Calu3 (cell line): ENCODE measurements at regions of chr5 and their contacts with region 1.

Region 1: DNA sequence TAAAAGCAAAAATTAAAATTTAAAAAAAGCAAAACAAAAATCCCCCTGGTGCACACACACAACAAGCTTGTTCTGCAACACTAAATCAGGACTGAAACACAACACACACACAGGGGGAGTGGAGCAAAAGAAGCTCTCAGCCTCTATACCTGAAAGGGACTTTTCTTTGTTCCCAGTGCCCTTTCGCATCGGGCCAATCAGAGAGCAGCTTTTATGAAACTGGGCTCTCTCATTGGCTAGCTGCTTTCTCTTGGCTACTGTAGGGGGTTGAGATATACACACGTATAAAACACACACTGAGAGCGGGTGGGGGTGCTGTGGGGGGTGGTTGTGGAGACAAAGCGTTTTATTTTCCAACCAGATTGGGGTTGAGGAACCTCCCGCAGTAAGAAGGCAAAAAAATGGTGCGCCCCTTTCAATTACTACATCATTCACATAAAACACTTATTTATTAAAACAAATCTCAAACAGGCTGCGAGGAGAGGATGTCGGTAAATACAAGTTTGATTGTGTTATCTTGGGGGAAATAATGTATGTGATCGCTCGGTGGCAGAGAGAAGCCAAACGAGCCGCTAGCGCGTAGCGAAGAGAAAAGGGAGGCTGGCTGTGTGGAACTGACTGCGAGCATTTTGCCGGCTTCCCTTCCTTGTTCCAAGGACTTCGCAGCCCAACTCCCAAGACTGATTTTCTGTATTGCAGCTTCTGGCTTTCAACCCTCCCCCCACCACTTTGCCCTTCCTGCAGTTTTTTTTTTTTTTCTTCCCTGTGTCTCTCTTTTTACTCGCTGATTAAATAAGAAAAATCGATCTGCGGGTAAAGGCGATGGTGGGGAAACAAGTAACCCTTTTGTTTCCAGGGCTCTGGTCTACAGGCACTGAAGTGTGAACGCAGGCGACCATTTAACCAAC is 2.5 kb upstream of the ZNF608 start:
- DNase-seq: peak; percentile 83
- H3K4me3 Mint-ChIP-seq: peak overlapping the region; percentile 80
- H3K27ac Mint-ChIP-seq: peak overlapping the region; percentile 96
- H3K4me1 Mint-ChIP-seq: peaks cover 26% of the 10 kb centered on the region
- H3K27me3 Mint-ChIP-seq: no peaks in the 10 kb centered on the region
- CTCF ChIP-seq: no peak

Region 2: GRCh38 chr5:124220418-124220817 is 528.5 kb before region 1 on chr5:
- CTCF ChIA-PET with region 1: no interaction called
- intact Hi-C with region 1: no loop called
- DNase-seq: no peak
- H3K4me3 Mint-ChIP-seq: no peak overlapping the region
- H3K27ac Mint-ChIP-seq: no peak overlapping the region
- H3K4me1 Mint-ChIP-seq: no peaks in the 10 kb centered on the region
- H3K27me3 Mint-ChIP-seq: no peaks in the 10 kb centered on the region
- CTCF ChIP-seq: no peak

Region 3: DNA sequence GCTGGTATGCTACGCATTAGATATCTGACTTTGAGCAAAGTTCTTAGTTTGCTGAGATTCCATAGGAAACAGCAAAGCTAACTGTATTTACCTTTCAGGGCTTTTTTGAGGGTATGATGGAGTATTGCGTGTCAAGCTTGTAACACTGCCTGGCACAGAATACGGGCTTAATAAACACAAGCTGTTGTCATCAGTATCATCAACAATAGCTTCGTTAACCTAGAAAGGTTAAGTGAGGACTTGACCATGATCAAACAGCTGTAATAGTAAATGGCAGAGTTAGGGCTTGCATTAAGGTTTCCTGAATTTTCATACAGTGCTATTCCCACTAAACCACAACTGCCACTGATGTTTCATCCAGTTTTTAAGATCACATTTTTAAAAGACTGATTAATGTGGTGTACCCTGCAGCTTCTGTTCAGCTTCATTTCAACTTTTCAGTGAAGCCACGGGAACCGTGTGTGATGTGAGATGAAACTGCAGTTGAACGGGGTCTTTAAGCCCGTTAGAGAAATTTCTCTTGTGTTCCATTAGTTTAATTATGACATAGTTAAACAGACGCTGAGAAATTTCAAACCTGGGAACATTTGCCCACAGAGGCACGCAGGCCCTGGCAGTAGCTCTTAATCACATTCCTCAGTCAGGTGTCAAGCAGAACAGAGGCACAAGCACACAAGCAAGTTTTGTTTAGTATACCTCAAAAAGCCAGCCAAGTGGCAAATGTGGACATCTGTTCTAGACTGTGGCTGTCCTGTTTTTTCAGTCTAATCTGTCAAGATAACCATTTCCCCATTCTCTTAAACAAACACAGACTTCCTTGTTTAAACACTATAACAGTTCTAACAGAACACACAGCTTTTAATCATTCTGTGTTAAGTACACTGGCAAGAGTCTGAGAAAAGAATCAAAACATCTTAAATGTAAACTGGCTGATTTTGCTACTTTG is 149.6 kb before region 1 on chr5:
- CTCF ChIA-PET with region 1: interaction called, 8 read pairs
- intact Hi-C with region 1: loop called (anchors 2 kb)
- DNase-seq: peak; percentile 67
- H3K4me3 Mint-ChIP-seq: peak overlapping the region; percentile 24
- H3K27ac Mint-ChIP-seq: peak overlapping the region; percentile 74
- H3K4me1 Mint-ChIP-seq: peaks cover 43% of the 10 kb centered on the region
- H3K27me3 Mint-ChIP-seq: no peaks in the 10 kb centered on the region
- CTCF ChIP-seq: no peak

Region 4: DNA sequence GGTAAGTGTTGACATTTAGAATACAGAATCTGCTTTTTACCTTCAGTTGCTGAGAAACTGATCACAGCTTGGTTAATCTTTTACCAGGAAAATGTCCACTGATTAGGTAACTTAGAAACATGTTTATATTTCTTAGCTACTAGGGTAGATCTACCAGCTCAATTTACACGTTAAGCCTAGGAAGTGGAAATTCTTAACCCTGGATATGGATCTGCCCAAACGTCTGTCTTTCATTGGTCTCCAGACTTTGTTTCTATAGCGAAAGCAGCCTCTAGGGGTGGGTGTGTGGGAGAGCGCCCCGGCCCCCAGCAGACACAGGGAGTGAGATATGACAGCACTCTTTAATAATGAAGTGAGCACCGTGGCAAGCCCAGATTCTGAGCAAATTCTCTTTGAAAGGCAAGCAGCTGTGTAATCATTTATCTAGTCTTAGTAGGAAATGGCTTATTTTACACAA is 139.1 kb after region 1 on chr5:
- CTCF ChIA-PET with region 1: interaction called, 5 read pairs
- intact Hi-C with region 1: loop called (anchors 2 kb)
- DNase-seq: peak; percentile 70
- H3K4me3 Mint-ChIP-seq: peak overlapping the region; percentile 55
- H3K27ac Mint-ChIP-seq: peak overlapping the region; percentile 88
- H3K4me1 Mint-ChIP-seq: peaks cover 22% of the 10 kb centered on the region
- H3K27me3 Mint-ChIP-seq: no peaks in the 10 kb centered on the region
- CTCF ChIP-seq: no peak

Region 5: GRCh38 chr5:125176009-125176477 is 427.1 kb after region 1 on chr5:
- CTCF ChIA-PET with region 1: no interaction called
- intact Hi-C with region 1: loop called (anchors 5 kb)
- DNase-seq: peak; percentile 21
- H3K4me3 Mint-ChIP-seq: no peak overlapping the region
- H3K27ac Mint-ChIP-seq: peak overlapping the region; percentile 87
- H3K4me1 Mint-ChIP-seq: peaks cover 15% of the 10 kb centered on the region
- H3K27me3 Mint-ChIP-seq: no peaks in the 10 kb centered on the region
- CTCF ChIP-seq: no peak

Region 6: DNA sequence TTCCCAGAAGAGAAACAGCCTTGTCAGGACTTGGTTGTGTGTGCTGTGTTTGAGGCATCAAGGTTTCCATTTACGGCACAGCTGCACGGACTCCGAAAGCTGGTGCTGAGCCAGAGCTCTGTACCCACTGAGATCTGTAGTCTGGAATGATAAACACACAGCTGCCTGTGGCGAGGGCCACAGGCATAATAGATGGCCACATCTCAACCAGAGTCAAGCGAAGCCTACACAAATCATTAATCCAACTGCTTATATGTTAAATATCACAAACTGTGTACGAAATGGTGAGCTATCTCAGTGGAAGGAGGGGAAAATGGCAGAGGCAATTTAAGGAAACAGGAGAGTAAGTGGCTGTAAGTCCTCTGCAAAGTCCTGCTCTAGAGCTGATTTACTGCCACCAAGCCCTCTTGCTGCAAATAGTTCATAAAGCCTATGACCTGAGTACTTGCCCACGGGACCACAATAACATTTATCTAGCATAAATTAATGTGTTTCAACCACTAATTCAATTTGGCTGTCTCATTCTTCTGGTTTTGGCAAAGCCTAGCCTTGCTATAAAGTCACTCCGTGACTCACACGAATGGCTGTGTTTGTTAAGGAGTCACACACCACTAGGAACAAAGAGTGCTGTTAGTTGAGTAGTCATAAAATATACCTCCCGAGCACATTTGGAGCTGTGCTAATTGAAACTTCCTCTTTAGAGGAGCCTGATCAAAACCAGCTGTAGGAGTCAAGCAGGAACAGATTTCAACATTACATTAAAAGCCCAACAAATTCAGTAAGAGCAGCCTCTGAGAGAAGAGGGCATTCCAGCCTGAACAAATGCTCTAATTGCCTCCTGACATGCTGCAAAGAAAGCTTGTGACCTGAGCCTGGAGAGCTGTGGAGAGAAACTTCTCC is 736.1 kb after region 1 on chr5:
- CTCF ChIA-PET with region 1: interaction called, 4 read pairs
- intact Hi-C with region 1: loop called (anchors 10 kb)
- DNase-seq: peak; percentile 56
- H3K4me3 Mint-ChIP-seq: peak overlapping the region; percentile 71
- H3K27ac Mint-ChIP-seq: peak overlapping the region; percentile 91
- H3K4me1 Mint-ChIP-seq: peaks cover 31% of the 10 kb centered on the region
- H3K27me3 Mint-ChIP-seq: no peaks in the 10 kb centered on the region
- CTCF ChIP-seq: no peak